Activated T-helper 1 cell treated with anti-CD3 and anti-CD28 coated beads, Interleukin-12 subunit alpha, Interleukin-12 subunit beta, Interleukin-2, Interleukin-4 antibody, amounts not matched to agents 30 ng/mL and 10 ng/mL and 1 ng/mL, durations not matched to agents 14 hours and 24 hours and 36 hours (primary cell): ENCODE measurements at regions of chr1 and their contacts with region 1.

Region 1: DNA sequence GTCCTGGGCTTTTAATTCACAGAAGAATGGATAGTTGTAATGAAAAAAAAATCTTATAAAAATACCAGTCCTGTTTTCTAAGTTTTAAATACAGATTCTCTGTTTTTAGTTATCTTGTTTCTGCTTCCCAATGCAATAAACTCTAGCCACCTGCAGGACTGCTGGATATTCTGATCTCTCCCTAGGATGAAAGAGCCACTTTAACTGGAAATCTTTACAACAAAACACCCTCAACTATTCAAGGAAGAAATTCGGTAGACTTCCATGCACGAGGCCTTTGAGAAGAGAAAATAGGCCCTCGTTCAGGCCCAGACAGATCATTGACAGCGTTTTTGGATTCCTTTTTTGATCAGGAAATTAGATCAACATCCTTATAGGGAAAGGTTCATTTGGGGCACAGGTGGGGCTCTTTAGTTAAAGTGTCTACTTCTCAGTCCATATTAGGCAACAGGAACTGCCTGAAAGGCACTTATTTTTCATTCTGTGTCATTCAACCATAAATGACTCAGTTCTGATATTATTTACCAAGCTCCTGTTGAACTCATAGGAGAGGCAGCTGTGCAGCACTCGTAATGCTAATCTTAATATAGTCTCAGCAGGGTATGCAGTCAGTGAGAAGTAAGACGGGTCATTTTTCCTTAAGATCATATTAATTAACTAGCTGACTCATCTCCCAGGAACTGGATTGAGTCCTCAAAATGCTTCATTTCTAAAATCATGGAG is 71.1 kb upstream of the ERRFI1 start:
- DNase-seq: peak; percentile 11
- H3K4me3 Mint-ChIP-seq: peak overlapping the region; percentile 63
- H3K27ac Mint-ChIP-seq: peak overlapping the region; percentile 69
- H3K4me1 Mint-ChIP-seq: peaks cover 37% of the 10 kb centered on the region
- H3K27me3 Mint-ChIP-seq: peaks cover 5% of the 10 kb centered on the region

Region 2: GRCh38 chr1:7948960-7949359 is 148.3 kb before region 1 on chr1:
- intact Hi-C with region 1: loop called (anchors 5 kb)
- DNase-seq: peak; percentile 38
- H3K4me3 Mint-ChIP-seq: peak overlapping the region; percentile 48
- H3K27ac Mint-ChIP-seq: peak overlapping the region; percentile 81
- H3K4me1 Mint-ChIP-seq: peaks cover 42% of the 10 kb centered on the region
- H3K27me3 Mint-ChIP-seq: peaks cover 2% of the 10 kb centered on the region

Region 3: GRCh38 chr1:8047681-8048445 is 49.4 kb before region 1 on chr1:
- intact Hi-C with region 1: no loop called
- DNase-seq: no peak
- H3K4me3 Mint-ChIP-seq: no peak overlapping the region
- H3K27ac Mint-ChIP-seq: no peak overlapping the region
- H3K4me1 Mint-ChIP-seq: peaks cover 5% of the 10 kb centered on the region
- H3K27me3 Mint-ChIP-seq: peaks cover 3% of the 10 kb centered on the region

Region 4: GRCh38 chr1:8152731-8153702 is 55.8 kb after region 1 on chr1:
- intact Hi-C with region 1: loop called (anchors 1 kb)
- DNase-seq: peak; percentile 41
- H3K4me3 Mint-ChIP-seq: peak overlapping the region; percentile 74
- H3K27ac Mint-ChIP-seq: peak overlapping the region; percentile 93
- H3K4me1 Mint-ChIP-seq: peaks cover 41% of the 10 kb centered on the region
- H3K27me3 Mint-ChIP-seq: peaks cover 26% of the 10 kb centered on the region

Region 5: DNA sequence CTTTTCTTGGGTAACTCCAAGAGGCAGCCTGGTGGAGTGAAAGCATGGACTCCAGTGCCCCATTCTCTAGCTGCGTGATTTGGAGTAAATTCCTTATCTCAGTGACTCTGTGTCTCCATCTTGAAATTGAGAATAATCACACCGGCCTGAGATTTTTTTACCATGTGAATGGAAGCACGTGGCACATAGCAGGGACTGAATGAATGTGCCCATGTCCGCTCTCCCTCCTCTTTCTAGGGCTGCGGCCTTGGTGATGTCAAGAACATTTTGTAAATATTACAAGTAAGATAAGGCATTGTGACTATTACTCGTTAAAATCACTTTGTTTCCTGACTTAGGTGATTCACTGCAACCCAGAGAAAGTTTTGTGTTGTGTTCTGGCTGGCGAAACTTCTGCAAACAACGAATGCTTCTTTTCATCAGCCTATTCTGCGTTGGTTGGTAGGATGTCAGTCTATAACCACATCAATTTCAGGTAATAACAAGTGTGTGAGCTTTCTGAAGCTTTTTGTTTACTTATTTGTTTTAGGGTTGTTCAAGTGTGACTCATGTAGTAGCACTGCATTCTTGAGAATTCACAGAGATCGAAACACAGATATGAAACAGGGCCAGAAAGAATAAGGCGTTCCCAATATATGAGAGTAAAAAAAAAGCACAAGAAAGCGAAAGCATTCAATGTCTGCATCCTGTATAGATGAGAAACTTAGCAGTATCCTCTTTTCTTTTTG is 85.0 kb after region 1 on chr1:
- intact Hi-C with region 1: loop called (anchors 1 kb)
- DNase-seq: peak; percentile 26
- H3K4me3 Mint-ChIP-seq: peak overlapping the region; percentile 53
- H3K27ac Mint-ChIP-seq: peak overlapping the region; percentile 70
- H3K4me1 Mint-ChIP-seq: peaks cover 21% of the 10 kb centered on the region
- H3K27me3 Mint-ChIP-seq: peaks cover 7% of the 10 kb centered on the region

Region 6: DNA sequence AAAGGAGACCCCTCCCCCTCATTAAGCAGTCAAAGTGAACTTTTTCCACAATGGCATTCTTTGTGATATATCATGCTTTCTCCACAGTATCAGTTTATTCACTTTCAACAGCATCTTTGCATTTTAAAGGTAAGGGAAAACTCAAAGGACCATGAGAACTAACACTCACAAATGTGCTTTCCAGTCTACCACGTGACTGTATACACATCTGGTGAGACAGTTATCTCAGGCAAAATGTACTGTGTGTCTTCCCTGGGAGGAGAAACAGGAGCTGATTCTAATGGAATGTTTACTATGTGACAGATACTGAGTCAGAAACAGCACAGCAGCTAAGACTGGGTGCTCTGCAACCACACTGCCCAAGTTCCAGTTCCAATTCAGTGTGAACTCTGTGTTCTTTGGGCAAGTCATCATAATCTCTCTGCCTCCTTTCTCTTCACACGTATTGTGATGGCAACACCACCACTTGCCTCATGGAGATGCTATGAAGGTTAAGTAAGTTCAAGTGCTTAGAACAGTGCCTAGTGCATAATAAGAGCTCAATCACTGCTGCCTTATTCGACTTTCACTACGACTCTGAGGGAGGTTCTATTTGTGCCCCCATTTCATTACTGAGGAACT is 299.7 kb after region 1 on chr1:
- intact Hi-C with region 1: loop called (anchors 2 kb)
- DNase-seq: no peak
- H3K4me3 Mint-ChIP-seq: no peak overlapping the region
- H3K27ac Mint-ChIP-seq: peak overlapping the region; percentile 71
- H3K4me1 Mint-ChIP-seq: peaks cover 63% of the 10 kb centered on the region
- H3K27me3 Mint-ChIP-seq: no peaks in the 10 kb centered on the region

Region 7: DNA sequence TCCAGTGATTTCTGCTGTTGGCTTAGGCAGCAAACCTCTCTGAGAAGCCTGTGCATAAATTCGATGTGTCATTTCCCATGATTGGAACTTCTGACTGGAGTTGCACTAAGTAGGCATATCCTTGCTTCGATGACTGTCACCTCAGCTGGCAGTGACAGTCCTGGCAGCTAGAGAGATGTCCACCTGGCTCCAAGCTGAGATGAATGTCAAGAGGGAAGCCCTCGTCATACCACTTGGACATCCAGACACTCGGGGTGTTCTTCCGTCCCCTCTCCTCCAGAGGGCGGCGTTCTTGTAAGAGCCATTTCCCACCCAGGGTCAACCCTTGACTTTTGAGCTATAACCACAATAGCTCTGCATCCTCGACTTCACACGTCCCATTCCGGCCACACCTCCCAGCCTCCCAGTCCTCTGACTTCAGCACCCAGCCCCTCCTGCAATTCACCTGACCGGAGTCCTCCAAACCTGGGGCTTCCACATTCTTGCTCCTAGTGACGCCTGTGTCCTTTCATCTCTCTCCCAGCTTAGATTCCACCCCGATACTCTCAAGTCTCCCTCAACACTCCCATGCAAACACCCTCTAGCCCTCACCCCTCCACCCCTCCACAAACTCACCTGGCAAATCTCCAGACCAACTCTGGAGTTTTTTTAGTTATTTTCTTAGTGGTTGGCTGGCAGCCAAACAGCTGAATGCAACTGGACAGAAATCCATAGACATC is 865.7 kb after region 1 on chr1:
- intact Hi-C with region 1: loop called (anchors 10 kb)
- DNase-seq: no peak
- H3K4me3 Mint-ChIP-seq: peak overlapping the region; percentile 49
- H3K27ac Mint-ChIP-seq: peak overlapping the region; percentile 74
- H3K4me1 Mint-ChIP-seq: peaks cover 85% of the 10 kb centered on the region
- H3K27me3 Mint-ChIP-seq: no peaks in the 10 kb centered on the region